Naive thymus-derived CD4-positive, alpha-beta T cell (primary cell): ENCODE measurements at regions of chr2 and their contacts with region 1.

Region 1: DNA sequence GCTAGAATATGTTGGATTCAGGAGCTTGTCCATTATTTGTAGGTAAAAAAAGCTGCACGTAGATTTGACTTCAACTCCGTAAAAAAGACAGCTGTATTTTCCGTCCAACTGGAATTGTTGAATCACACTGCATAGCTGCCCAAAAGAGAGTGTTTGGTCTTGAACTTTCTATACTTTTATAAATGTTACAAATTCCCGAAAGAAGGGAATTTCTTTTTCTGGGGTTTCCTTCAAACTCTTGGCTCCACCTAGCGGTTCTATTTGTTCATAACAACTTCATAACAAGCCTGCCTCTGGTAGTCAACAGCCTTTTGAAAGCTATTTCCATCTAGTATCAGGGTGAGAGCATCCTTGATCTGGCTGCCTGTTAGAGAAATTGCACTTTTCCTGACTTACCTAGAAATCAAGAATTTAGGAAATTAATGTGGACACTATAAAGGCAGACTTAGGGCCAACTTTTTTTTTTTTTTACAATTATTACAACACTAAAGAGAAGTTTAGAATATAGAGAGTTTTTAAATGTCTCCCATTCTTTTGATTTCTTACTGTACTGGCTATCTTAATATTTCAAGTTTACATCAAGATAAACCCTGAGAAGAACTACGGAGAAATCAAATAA is 48.1 kb downstream of the TMEM185B start:
- DNase-seq: peak in 7 of 9 donors; percentile 37 to 63 (median 56)
- ATAC-seq: no peak
- H3K4me3 ChIP-seq: no peak overlapping the region
- H3K4me3 Mint-ChIP-seq: peak overlapping the region in 5 of 10 donors; percentile 7 to 50 (median 20)
- H3K27ac ChIP-seq: peak overlapping the region; percentile 79
- H3K27ac Mint-ChIP-seq: peak overlapping the region in 8 of 9 donors; percentile 84 to 99 (median 96)
- H3K4me1 ChIP-seq: peaks cover 17 to 49% of the 10 kb centered on the region in 2 donors
- H3K4me1 Mint-ChIP-seq: peaks cover 13 to 53% (median 43%) of the 10 kb centered on the region in 7 donors
- H3K27me3 ChIP-seq: no peaks in the 10 kb centered on the region
- H3K27me3 Mint-ChIP-seq: peaks cover 0 to 3% (median 0%) of the 10 kb centered on the region in 5 donors

Region 2: GRCh38 chr2:119407430-119408220 is 767.4 kb before region 1 on chr2:
- CTCF ChIA-PET with region 1: no interaction called
- POLR2A ChIA-PET with region 1: no interaction called
- intact Hi-C with region 1: loop called in 1 of 2 experiments (anchors 5 kb)
- DNase-seq: peak in 6 of 9 donors; percentile 5 to 50 (median 30)
- ATAC-seq: peak; percentile 57
- H3K4me3 ChIP-seq: no peak overlapping the region
- H3K4me3 Mint-ChIP-seq: no peak overlapping the region
- H3K27ac ChIP-seq: no peak overlapping the region
- H3K27ac Mint-ChIP-seq: no peak overlapping the region
- H3K4me1 ChIP-seq: no peaks in the 10 kb centered on the region
- H3K4me1 Mint-ChIP-seq: no peaks in the 10 kb centered on the region
- H3K27me3 ChIP-seq: no peaks in the 10 kb centered on the region
- H3K27me3 Mint-ChIP-seq: peaks cover 7 to 16% (median 10%) of the 10 kb centered on the region in 5 donors

Region 3: DNA sequence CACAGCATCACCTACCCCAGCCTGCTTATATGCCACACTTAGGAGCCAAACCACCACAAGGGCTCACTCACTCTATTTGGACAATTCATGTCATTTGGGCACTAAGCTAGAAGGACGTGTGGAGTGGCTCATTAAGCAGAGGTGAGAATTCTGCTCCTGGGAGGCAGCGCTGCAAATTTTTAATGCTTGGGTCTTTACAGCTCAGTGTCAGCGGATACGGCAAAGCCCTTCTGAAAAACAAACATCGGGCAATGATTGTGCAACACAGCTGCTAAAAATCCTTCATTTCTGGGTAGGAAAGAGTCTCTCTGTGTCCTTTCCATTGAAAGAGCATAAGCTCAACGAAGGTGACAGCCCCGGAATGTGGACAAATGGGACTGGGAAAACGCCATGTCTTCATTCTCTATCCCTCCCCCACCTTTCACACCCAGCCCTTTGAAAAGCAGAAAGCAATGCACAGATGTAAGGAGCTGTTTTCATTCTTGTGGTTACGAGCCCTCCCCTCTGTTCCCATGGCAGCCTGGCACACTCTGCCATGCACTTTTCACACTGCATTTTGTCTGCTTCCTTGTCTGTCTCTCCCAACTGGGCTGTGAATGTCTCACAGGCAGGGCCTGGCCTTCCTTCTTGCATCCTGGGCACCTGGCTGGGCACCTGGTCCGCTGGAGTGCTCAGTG is 480.1 kb before region 1 on chr2:
- CTCF ChIA-PET with region 1: interaction called, 4 read pairs
- POLR2A ChIA-PET with region 1: interaction called, 8 read pairs
- intact Hi-C with region 1: loop called in 1 of 2 experiments (anchors 2 kb)
- DNase-seq: peak in 7 of 9 donors; percentile 62 to 79 (median 72)
- ATAC-seq: peak; percentile 74
- H3K4me3 ChIP-seq: peak overlapping the region; percentile 53
- H3K4me3 Mint-ChIP-seq: peak overlapping the region in 9 of 10 donors; percentile 74 to 91 (median 89)
- H3K27ac ChIP-seq: peak overlapping the region; percentile 56
- H3K27ac Mint-ChIP-seq: peak overlapping the region in 8 of 9 donors; percentile 83 to 97 (median 92)
- H3K4me1 ChIP-seq: peaks cover 0 to 50% of the 10 kb centered on the region in 2 donors
- H3K4me1 Mint-ChIP-seq: peaks cover 17 to 60% (median 55%) of the 10 kb centered on the region in 7 donors
- H3K27me3 ChIP-seq: no peaks in the 10 kb centered on the region
- H3K27me3 Mint-ChIP-seq: no peaks in the 10 kb centered on the region

Region 4: GRCh38 chr2:119826370-119826961 is 348.6 kb before region 1 on chr2:
- CTCF ChIA-PET with region 1: interaction called, 4 read pairs
- POLR2A ChIA-PET with region 1: no interaction called
- intact Hi-C with region 1: loop called (anchors 1 to 2 kb)
- DNase-seq: peak in 7 of 9 donors; percentile 10 to 53 (median 28)
- ATAC-seq: peak; percentile 82
- H3K4me3 ChIP-seq: no peak overlapping the region
- H3K4me3 Mint-ChIP-seq: no peak overlapping the region
- H3K27ac ChIP-seq: no peak overlapping the region
- H3K27ac Mint-ChIP-seq: peak overlapping the region in 4 of 9 donors; percentile 32 to 67 (median 45)
- H3K4me1 ChIP-seq: peaks cover 0 to 8% of the 10 kb centered on the region in 2 donors
- H3K4me1 Mint-ChIP-seq: peaks cover 22 to 76% (median 59%) of the 10 kb centered on the region in 7 donors
- H3K27me3 ChIP-seq: no peaks in the 10 kb centered on the region
- H3K27me3 Mint-ChIP-seq: no peaks in the 10 kb centered on the region

Region 5: DNA sequence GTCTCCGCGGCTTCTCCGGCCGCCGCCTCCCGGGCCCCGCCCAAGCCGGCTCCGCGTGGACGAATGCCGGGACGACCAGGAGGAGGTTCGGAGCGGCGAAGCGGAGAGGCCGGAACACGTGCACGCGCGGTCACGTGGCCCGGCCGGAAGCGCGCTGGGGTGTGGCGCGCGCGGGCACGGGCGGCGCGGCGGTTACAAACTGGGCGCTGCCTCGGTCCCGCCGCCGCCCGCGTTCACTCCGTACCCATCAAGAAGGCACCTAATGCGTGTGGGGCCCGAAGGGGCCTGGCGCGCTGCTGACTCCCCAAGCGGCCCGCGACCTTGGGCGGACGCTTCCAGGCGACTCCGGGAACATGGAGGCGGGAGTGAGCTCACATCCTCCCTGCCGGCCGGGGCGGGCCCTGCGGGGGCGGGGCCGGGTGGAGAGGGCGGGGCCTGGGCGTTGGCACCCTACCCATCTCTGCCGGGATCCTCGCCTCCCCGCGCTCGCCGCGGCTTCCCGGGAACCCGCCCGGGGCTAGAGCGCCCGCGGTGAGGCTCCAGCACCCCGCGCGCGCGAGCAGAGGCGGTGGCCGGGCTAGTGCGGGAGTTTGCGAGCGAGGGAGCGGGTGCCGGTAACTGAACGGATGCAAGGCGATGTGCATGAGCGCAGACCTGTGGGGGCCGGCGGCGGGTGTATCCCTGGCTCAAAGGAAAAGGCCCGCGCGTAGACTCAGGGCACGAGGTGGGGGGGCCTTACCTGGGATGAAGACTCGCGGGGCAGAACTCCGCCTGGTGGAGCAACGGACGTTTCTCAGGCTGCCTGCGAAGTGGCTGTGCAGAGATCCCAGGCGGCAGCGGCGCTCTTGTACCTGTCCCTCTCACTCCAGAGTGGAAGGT is 48.2 kb after region 1 on chr2 and contains the start of gene TMEM185B:
- CTCF ChIA-PET with region 1: interaction called, 7 read pairs
- POLR2A ChIA-PET with region 1: interaction called, 20 read pairs
- intact Hi-C with region 1: loop called (anchors 1 kb)
- DNase-seq: peak; percentile 83 to 96 (median 90)
- ATAC-seq: peak; percentile 97
- H3K4me3 ChIP-seq: peak within 1 kb of the TSS; percentile 74
- H3K4me3 Mint-ChIP-seq: peak within 1 kb of the TSS; percentile 83 to 91 (median 88)
- H3K27ac ChIP-seq: peak within 1 kb of the TSS; percentile 94
- H3K27ac Mint-ChIP-seq: peak within 1 kb of the TSS; percentile 85 to 92 (median 91)
- H3K4me1 ChIP-seq: peaks cover 20 to 23% of the 10 kb centered on the region in 2 donors
- H3K4me1 Mint-ChIP-seq: peaks cover 34 to 67% (median 56%) of the 10 kb centered on the region in 7 donors
- H3K27me3 ChIP-seq: no peaks in the 10 kb centered on the region
- H3K27me3 Mint-ChIP-seq: no peaks in the 10 kb centered on the region
- total RNA-seq, gene TMEM185B: 14.9 to 36.8 (median 19.5) TPM

Region 6: DNA sequence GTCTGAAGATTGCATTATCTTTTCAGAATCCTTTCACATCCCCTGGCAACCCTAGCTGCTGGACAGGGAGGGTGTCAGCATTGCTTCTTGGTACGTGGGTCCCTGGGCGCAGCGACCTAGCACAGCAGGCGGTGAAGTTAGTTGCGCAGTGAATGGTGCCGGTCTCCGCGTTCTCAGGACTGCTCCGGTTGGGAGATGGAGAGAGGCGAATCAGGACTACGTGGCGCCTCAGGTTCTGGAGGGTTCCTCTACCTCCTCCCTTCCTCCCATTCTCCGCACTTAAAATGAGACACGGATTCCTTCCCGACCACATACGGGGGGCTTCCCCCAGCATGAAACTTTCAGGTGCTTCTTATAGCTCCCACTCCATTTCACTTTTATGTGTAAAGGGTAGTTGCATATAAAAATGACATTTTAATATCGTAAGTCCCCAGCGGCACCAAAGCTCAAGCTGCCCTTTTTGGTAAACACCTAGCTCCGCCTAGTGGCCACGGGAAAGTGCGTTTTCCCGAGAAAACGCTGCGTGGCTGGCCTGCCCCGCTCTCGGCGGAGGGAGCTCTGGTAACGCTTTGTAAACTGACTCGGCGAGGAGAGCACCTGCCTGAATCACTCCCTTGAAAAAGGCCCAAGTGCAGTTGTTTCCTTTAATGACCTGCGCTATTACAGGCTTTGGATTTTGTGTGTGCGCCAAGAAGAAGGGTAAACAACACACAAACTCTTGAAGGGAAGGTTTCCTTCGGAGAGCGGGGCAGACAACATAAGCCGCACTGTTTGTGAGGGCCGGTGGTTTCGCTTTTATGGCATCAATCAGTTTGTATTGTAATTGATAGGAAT is 138.0 kb after region 1 on chr2:
- CTCF ChIA-PET with region 1: interaction called, 40 read pairs
- POLR2A ChIA-PET with region 1: interaction called, 11 read pairs
- intact Hi-C with region 1: loop called (anchors 1 kb)
- DNase-seq: peak; percentile 46 to 77 (median 67)
- ATAC-seq: peak; percentile 78
- H3K4me3 ChIP-seq: peak overlapping the region; percentile 49
- H3K4me3 Mint-ChIP-seq: peak overlapping the region; percentile 76 to 92 (median 86)
- H3K27ac ChIP-seq: peak overlapping the region; percentile 8
- H3K27ac Mint-ChIP-seq: peak overlapping the region; percentile 32 to 91 (median 67)
- H3K4me1 ChIP-seq: peaks cover 3 to 19% of the 10 kb centered on the region in 2 donors
- H3K4me1 Mint-ChIP-seq: peaks cover 7 to 45% (median 34%) of the 10 kb centered on the region in 7 donors
- H3K27me3 ChIP-seq: no peaks in the 10 kb centered on the region
- H3K27me3 Mint-ChIP-seq: peaks cover 0 to 4% (median 0%) of the 10 kb centered on the region in 5 donors

Region 7: DNA sequence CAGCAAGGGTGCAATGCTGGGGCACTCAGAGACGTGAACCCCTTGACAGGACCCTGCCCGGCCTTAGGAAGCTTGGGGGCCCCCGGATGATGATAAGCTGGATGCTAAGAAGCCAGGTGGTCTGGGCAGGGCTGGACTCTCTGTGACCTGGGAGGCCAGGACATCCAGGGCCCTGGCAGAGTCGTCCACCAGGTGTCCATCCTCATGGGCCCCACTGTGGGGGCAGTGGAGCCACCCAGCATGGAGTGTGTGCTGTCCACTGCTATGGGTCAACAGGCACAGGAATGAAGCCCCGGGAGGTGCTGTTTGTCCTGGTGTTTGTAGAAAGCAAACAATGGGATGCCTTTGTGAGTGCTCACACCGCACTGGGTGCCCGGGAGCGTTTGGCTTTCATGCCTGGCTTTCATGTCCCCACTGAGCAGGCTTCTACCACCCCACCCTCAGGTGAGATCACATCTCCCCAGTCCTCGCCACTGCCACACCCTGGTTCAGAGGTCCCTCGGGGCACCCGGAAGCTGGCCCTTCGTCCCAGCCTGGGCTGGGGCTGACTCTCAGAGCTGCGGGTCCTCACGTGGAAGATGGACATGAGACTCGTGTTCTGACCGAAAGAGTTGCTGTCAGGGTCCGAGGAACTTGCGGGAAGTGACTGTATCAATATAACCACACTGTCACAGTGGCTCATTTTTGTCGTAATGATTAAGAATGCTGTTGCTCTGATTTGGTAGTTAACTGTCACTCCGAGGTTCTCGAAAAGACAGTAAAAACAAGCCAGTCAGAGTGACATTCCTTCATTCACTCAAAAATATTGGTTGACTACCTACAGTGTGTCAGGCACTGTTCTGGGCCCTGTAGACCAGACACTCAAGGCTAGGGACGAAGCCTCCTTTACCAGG is 224.2 kb after region 1 on chr2:
- CTCF ChIA-PET with region 1: no interaction called
- POLR2A ChIA-PET with region 1: no interaction called
- intact Hi-C with region 1: no loop called
- DNase-seq: no peak
- ATAC-seq: no peak
- H3K4me3 ChIP-seq: no peak overlapping the region
- H3K4me3 Mint-ChIP-seq: no peak overlapping the region
- H3K27ac ChIP-seq: no peak overlapping the region
- H3K27ac Mint-ChIP-seq: no peak overlapping the region
- H3K4me1 ChIP-seq: no peaks in the 10 kb centered on the region
- H3K4me1 Mint-ChIP-seq: peaks cover 0 to 2% (median 0%) of the 10 kb centered on the region in 7 donors
- H3K27me3 ChIP-seq: no peaks in the 10 kb centered on the region
- H3K27me3 Mint-ChIP-seq: peaks cover 0 to 10% (median 5%) of the 10 kb centered on the region in 5 donors

Region 8: GRCh38 chr2:122028371-122029100 is 1853.5 kb after region 1 on chr2:
- CTCF ChIA-PET with region 1: no interaction called
- POLR2A ChIA-PET with region 1: no interaction called
- intact Hi-C with region 1: no loop called
- DNase-seq: no peak
- ATAC-seq: no peak
- H3K4me3 ChIP-seq: no peak overlapping the region
- H3K4me3 Mint-ChIP-seq: no peak overlapping the region
- H3K27ac ChIP-seq: no peak overlapping the region
- H3K27ac Mint-ChIP-seq: no peak overlapping the region
- H3K4me1 ChIP-seq: no peaks in the 10 kb centered on the region
- H3K4me1 Mint-ChIP-seq: peaks cover 0 to 2% (median 0%) of the 10 kb centered on the region in 7 donors
- H3K27me3 ChIP-seq: no peaks in the 10 kb centered on the region
- H3K27me3 Mint-ChIP-seq: peaks cover 0 to 32% (median 5%) of the 10 kb centered on the region in 5 donors